ENCODE measurements at regions of chr4 and their contacts with region 1.

Region 1: DNA sequence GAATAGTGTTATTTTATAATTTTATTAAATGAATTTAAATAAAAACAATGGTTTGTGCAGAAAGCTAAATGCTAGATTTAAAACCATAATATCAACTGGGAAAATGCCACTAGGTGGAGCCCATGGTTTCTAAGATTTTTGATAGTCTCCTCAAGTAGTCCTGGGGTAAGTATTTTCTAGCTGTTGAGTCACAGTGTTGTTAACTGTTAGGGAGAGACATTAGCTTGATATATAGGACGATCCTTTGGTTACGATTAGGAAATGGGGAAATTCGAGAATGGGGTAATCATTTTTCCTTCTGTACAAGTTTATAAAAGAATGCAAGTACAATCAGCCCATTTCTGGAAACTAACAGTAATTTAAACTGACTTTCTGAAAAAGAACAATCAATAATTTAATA is 378.4 kb downstream of the ANKRD50 start:
- DNase-seq: no peak
- ATAC-seq: no peak
- H3K4me3 Mint-ChIP-seq: no peak overlapping the region
- H3K27ac Mint-ChIP-seq: no peak overlapping the region
- H3K4me1 Mint-ChIP-seq: no peaks in the 10 kb centered on the region
- H3K27me3 Mint-ChIP-seq: peaks cover 2% of the 10 kb centered on the region

Region 2: DNA sequence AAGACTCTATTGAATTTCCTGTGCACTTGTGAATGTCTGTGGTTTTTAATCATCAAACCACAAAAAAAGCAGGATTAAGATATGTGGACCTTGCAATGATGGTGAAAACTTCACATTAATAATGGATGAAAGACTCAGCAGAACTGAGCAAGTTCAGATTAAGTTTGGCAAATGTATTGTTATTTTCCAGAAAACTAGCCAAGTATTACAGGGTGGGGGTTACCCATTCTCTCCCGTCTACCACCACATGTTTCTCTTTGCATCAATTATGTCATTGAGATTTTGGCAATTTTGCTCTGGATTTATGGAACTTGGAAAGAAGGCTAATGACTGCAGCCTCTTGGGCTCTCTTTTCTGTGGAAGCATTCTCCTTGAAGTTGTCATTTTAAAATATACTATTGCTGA is 198.7 kb before region 1 on chr4:
- CTCF ChIA-PET with region 1: no interaction called
- POLR2A ChIA-PET with region 1: no interaction called
- DNase-seq: no peak
- ATAC-seq: no peak
- H3K4me3 Mint-ChIP-seq: no peak overlapping the region
- H3K27ac Mint-ChIP-seq: no peak overlapping the region
- H3K4me1 Mint-ChIP-seq: no peaks in the 10 kb centered on the region
- H3K27me3 Mint-ChIP-seq: no peaks in the 10 kb centered on the region

Region 3: GRCh38 chr4:125283707-125284279 is 949.7 kb after region 1 on chr4:
- CTCF ChIA-PET with region 1: interaction called, 10 read pairs
- POLR2A ChIA-PET with region 1: no interaction called
- DNase-seq: no peak
- ATAC-seq: no peak
- H3K4me3 Mint-ChIP-seq: no peak overlapping the region
- H3K27ac Mint-ChIP-seq: no peak overlapping the region
- H3K4me1 Mint-ChIP-seq: no peaks in the 10 kb centered on the region
- H3K27me3 Mint-ChIP-seq: no peaks in the 10 kb centered on the region